ENCODE measurements at regions of chr5 and their contacts with region 1.

Region 1: DNA sequence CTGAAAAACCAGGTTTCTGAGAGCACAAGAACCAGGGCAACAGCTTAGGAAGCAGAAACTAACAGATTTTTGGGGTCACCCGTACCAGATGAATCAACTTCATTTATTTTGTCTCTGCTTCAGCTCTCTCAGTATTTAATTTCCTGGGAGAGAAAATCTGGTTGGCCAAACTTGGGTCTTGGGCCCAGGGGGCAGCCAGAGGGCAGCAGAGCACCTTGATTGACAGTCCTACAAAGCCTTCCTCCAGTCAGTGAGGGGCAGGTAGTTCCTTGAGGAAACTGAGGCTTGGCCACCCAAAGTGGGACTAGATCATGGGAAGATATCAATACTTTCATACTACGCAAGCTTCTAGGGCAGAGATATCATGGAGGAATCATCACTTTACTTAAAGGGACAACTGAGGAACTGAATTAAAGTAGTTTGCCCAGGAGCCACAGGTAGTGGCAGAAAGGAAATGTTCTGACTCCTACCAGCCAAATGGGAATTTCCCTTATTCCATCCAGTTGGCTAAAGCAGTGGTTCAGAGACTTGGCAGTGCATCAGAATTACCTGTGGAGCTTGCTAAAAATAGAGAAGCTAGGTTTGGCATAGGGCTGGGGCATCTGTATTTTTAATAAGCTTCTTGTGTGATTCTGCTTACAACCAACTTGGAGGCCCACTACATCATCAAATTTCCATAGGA is 21.5 kb upstream of the ARHGAP26 start:
- DNase-seq: peak; percentile 16 to 77 (median 61)
- ATAC-seq: peak; percentile 61
- H3K4me3 ChIP-seq: no peak overlapping the region
- H3K4me3 Mint-ChIP-seq: no peak overlapping the region
- H3K27ac ChIP-seq: no peak overlapping the region
- H3K27ac Mint-ChIP-seq: no peak overlapping the region
- H3K4me1 ChIP-seq: no peaks in the 10 kb centered on the region
- H3K4me1 Mint-ChIP-seq: peaks cover 2% of the 10 kb centered on the region
- H3K27me3 ChIP-seq: no peaks in the 10 kb centered on the region
- H3K27me3 Mint-ChIP-seq: peaks cover 2% of the 10 kb centered on the region
- CTCF ChIP-seq: peak; percentile 66

Region 2: GRCh38 chr5:142720641-142721271 is 28.0 kb before region 1 on chr5:
- CTCF ChIA-PET with region 1: interaction called, 101 read pairs
- POLR2A ChIA-PET with region 1: no interaction called
- intact Hi-C with region 1: no loop called
- DNase-seq: no peak
- ATAC-seq: no peak
- H3K4me3 ChIP-seq: no peak overlapping the region
- H3K4me3 Mint-ChIP-seq: no peak overlapping the region
- H3K27ac ChIP-seq: no peak overlapping the region
- H3K27ac Mint-ChIP-seq: no peak overlapping the region
- H3K4me1 ChIP-seq: no peaks in the 10 kb centered on the region
- H3K4me1 Mint-ChIP-seq: peaks cover 5% of the 10 kb centered on the region
- H3K27me3 ChIP-seq: no peaks in the 10 kb centered on the region
- H3K27me3 Mint-ChIP-seq: peaks cover 2% of the 10 kb centered on the region
- CTCF ChIP-seq: no peak

Region 3: GRCh38 chr5:142783601-142784341 is 35.1 kb after region 1 on chr5:
- CTCF ChIA-PET with region 1: interaction called, 19 read pairs
- POLR2A ChIA-PET with region 1: no interaction called
- intact Hi-C with region 1: no loop called
- DNase-seq: peak in 7 of 9 experiments; percentile 16 to 80 (median 52)
- ATAC-seq: peak; percentile 60
- H3K4me3 ChIP-seq: peak overlapping the region in 1 of 2 experiments; percentile 47
- H3K4me3 Mint-ChIP-seq: peak overlapping the region; percentile 77
- H3K27ac ChIP-seq: peak overlapping the region; percentile 16 to 72
- H3K27ac Mint-ChIP-seq: peak overlapping the region; percentile 77
- H3K4me1 ChIP-seq: peaks cover 59% of the 10 kb centered on the region
- H3K4me1 Mint-ChIP-seq: peaks cover 79% of the 10 kb centered on the region
- H3K27me3 ChIP-seq: no peaks in the 10 kb centered on the region
- H3K27me3 Mint-ChIP-seq: no peaks in the 10 kb centered on the region
- CTCF ChIP-seq: no peak

Region 4: DNA sequence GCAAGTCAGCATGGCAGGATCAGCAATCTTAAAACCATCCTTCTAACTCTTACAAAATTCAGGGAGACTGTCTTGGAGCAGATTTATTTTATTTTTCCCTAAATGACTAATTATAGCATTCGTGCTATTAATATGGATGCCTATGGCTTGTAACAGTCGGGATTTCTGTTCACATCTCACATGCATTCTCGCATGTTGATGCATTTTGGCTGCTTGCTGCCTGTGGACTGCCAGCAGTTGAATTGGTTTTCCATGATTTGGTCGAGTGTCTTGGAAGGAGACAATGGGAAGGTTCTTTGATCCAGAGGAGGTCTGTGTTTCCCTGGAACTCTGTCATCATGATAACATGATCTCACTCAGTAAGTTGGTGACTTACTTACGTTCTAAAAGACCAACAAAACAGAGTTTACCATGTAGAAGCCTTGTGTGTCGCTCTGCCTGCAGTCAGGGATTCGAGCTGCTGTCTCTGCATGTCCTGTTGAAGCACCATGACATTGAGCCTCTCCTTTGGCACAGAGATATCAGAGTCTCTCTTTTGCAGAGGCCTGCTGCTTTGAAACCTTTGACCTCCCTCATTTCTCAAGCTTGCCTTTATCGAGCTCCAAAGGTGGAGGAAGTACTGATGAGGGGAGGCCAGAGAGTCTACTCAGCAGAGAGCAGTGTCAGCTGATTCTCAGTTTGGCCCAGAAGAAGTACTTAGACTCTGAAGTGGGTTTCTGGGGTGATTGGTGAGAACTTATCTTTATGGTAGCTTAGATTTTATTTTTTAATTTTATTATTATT is 103.9 kb after region 1 on chr5:
- CTCF ChIA-PET with region 1: interaction called, 11 read pairs
- POLR2A ChIA-PET with region 1: no interaction called
- intact Hi-C with region 1: no loop called
- DNase-seq: no peak
- ATAC-seq: no peak
- H3K4me3 ChIP-seq: no peak overlapping the region
- H3K4me3 Mint-ChIP-seq: no peak overlapping the region
- H3K27ac ChIP-seq: no peak overlapping the region
- H3K27ac Mint-ChIP-seq: no peak overlapping the region
- H3K4me1 ChIP-seq: no peaks in the 10 kb centered on the region
- H3K4me1 Mint-ChIP-seq: peaks cover 85% of the 10 kb centered on the region
- H3K27me3 ChIP-seq: no peaks in the 10 kb centered on the region
- H3K27me3 Mint-ChIP-seq: no peaks in the 10 kb centered on the region
- CTCF ChIP-seq: no peak

Region 5: DNA sequence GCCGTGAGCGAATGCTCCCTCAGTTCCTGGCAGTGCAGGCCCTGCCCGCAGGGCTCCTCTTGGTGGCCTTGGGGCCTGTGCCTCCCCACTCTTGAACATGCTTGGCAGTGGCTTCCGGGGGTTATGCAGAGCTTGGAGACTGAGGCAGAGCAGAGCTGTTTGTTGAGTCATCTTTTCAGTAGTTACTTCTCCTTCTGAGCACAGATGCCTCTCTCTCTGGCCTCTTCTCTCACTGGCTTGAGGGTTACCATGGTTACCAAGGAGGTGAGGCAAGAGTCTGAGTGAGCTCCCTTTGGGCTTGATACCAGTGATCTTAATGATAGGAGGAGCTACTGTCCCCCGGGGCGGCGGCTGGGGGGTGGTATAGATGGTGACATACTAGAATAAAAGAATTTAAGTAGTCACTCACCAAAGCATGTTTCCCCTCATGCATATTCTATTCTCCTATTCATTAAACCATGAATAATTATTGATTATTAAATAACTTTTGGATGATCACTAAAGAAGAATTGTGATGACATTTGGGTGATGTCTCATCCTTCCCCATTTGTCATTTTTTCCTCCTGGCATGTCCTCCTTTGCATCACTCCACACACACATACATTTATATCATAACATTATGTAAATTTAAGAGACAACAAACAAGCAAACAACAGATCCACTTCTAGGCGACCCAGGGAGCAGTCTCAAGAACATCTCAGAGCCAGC is 132.5 kb after region 1 on chr5:
- CTCF ChIA-PET with region 1: interaction called, 269 read pairs
- POLR2A ChIA-PET with region 1: interaction called, 5 read pairs
- intact Hi-C with region 1: loop called (anchors 1 kb)
- DNase-seq: peak in 1 of 9 experiments; percentile 39
- ATAC-seq: no peak
- H3K4me3 ChIP-seq: no peak overlapping the region
- H3K4me3 Mint-ChIP-seq: no peak overlapping the region
- H3K27ac ChIP-seq: no peak overlapping the region
- H3K27ac Mint-ChIP-seq: no peak overlapping the region
- H3K4me1 ChIP-seq: no peaks in the 10 kb centered on the region
- H3K4me1 Mint-ChIP-seq: peaks cover 6% of the 10 kb centered on the region
- H3K27me3 ChIP-seq: no peaks in the 10 kb centered on the region
- H3K27me3 Mint-ChIP-seq: no peaks in the 10 kb centered on the region
- CTCF ChIP-seq: no peak

Region 6: DNA sequence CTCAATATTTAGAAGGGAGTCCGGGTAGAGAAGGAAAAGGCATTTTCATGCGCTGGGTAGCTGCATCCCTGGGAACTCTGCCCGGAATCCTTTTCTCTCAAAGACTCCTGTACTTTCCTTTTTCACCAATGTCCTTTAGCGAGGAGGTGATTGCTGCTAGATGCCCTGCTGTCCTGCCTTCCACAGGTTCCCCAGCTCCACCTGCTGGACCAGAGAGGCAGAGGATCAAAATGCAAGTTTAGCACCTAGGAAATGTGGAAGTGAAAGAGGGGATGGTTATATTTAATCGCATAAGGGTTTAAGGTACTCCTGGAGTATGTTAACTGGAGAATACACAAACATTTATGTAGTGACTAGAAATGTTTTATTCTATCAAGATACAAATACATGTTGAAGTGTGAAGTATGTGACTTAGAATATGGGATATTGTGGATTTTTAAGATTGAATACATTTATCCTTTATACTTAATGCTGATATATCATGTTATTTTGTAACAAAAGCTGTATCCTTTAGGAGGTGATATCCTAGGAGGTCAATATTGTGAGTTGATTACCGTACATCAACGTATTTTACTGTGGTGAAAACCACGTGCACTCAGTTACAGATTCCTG is 167.2 kb after region 1 on chr5:
- CTCF ChIA-PET with region 1: interaction called, 13 read pairs
- POLR2A ChIA-PET with region 1: no interaction called
- intact Hi-C with region 1: no loop called
- DNase-seq: peak in 2 of 9 experiments; percentile 20 to 25
- ATAC-seq: no peak
- H3K4me3 ChIP-seq: no peak overlapping the region
- H3K4me3 Mint-ChIP-seq: no peak overlapping the region
- H3K27ac ChIP-seq: no peak overlapping the region
- H3K27ac Mint-ChIP-seq: no peak overlapping the region
- H3K4me1 ChIP-seq: no peaks in the 10 kb centered on the region
- H3K4me1 Mint-ChIP-seq: no peaks in the 10 kb centered on the region
- H3K27me3 ChIP-seq: no peaks in the 10 kb centered on the region
- H3K27me3 Mint-ChIP-seq: no peaks in the 10 kb centered on the region
- CTCF ChIP-seq: no peak

Region 7: GRCh38 chr5:143248822-143249579 is 500.3 kb after region 1 on chr5:
- CTCF ChIA-PET with region 1: no interaction called
- POLR2A ChIA-PET with region 1: no interaction called
- intact Hi-C with region 1: no loop called
- DNase-seq: no peak
- ATAC-seq: no peak
- H3K4me3 ChIP-seq: no peak overlapping the region
- H3K4me3 Mint-ChIP-seq: no peak overlapping the region
- H3K27ac ChIP-seq: no peak overlapping the region
- H3K27ac Mint-ChIP-seq: no peak overlapping the region
- H3K4me1 ChIP-seq: no peaks in the 10 kb centered on the region
- H3K4me1 Mint-ChIP-seq: no peaks in the 10 kb centered on the region
- H3K27me3 ChIP-seq: no peaks in the 10 kb centered on the region
- H3K27me3 Mint-ChIP-seq: no peaks in the 10 kb centered on the region
- CTCF ChIP-seq: no peak

Measured in CD8-positive, alpha-beta T cell (primary cell).